IMR-90 (cell line): ENCODE measurements at regions of chr17 and their contacts with region 1.

Region 1: GRCh38 chr17:28053044-28053670 is 10.7 kb downstream of the NLK start:
- DNase-seq: no peak
- ATAC-seq: 0 out of 2 replicates have a peak, but pooled peaks have one; percentile 18
- H3K4me3 ChIP-seq: no peak overlapping the region
- H3K27ac ChIP-seq: no peak overlapping the region
- H3K4me1 ChIP-seq: peaks cover 9% of the 10 kb centered on the region
- H3K27me3 ChIP-seq: no peaks in the 10 kb centered on the region
- CTCF ChIP-seq: no peak
- POLR2A ChIP-seq: no peak
- RAD21 ChIP-seq: no peak

Region 2: DNA sequence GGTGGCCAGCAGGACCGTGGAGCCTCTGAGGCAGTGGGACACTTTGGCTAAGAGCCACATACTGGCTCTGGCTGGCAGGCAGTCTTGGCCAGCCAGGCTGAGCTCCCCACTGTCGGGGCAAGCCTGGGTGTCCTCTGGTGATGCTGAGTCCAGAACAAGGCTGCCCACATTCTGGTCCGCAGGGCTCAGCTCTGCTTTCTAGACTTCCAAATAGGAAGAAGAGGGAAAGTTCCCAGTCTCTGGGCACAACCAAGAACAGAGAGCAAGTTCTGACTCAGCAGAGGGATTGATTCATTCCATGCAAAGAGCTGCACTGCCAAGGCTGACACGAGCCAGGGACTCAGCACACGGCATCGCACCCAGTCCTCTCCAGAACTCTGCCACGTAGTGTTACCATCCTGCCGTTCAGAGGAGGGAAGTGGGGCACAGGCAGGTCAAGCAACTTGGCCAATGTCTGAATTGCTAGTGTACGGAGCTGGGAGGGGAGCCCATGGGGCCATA is 311.7 kb before region 1 on chr17:
- CTCF ChIA-PET with region 1: no interaction called
- POLR2A ChIA-PET with region 1: no interaction called
- dilution Hi-C with region 1: no loop called
- in situ Hi-C with region 1: no loop called
- intact Hi-C with region 1: no loop called
- DNase-seq: peak; percentile 10
- ATAC-seq: peak; percentile 57
- H3K4me3 ChIP-seq: no peak overlapping the region
- H3K27ac ChIP-seq: no peak overlapping the region
- H3K4me1 ChIP-seq: no peaks in the 10 kb centered on the region
- H3K27me3 ChIP-seq: peaks cover 1% of the 10 kb centered on the region
- CTCF ChIP-seq: no peak
- POLR2A ChIP-seq: no peak
- RAD21 ChIP-seq: no peak

Region 3: DNA sequence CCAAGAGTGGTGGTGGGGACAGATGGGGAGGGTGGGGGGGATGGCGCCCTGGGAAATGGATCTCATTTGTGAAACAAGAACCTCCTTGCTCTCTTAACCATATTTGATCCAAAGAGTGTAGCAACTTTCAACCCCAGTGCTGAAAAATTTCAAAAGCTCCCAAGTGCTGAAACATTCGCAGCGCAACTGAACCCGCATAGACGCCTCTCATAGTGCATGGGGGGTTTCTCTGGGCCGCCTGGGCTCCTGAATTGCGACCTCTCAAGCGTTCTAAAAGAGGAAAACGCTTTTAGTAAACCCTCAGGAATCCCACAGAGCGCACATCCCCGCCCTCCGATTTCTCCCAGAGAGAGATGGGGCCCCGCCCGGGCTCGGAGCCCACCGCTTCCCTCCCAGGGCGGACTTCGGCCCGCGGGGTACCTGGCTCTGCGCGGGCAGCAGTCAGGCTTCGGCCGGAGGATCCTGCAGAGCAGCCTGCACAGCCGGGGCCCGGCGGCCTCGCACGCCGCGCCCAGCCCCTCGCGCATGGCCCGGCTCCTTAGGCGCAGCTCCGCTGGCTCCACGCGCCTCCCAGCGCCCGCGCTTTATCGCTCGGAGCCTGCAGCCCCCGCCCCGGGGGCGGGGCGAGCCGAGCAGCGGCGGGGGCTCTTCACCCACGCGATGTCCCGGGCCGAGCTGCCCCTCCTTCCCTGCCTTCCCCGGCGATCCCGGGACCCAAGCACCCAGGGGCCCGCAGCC is 259.8 kb before region 1 on chr17:
- CTCF ChIA-PET with region 1: no interaction called
- POLR2A ChIA-PET with region 1: interaction called, 19 read pairs
- dilution Hi-C with region 1: no loop called
- in situ Hi-C with region 1: no loop called
- intact Hi-C with region 1: no loop called
- DNase-seq: no peak
- ATAC-seq: peak; percentile 86
- H3K4me3 ChIP-seq: no peak overlapping the region; the same call in 1 of the 2 replicates
- H3K27ac ChIP-seq: no peak overlapping the region
- H3K4me1 ChIP-seq: no peaks in the 10 kb centered on the region
- H3K27me3 ChIP-seq: peaks cover 44% of the 10 kb centered on the region
- CTCF ChIP-seq: no peak
- POLR2A ChIP-seq: no peak
- RAD21 ChIP-seq: no peak

Region 4: GRCh38 chr17:28125530-28126378 is 72.6 kb after region 1 on chr17:
- CTCF ChIA-PET with region 1: no interaction called
- POLR2A ChIA-PET with region 1: no interaction called
- dilution Hi-C with region 1: no loop called
- in situ Hi-C with region 1: no loop called
- intact Hi-C with region 1: loop called (anchors 5 kb)
- DNase-seq: no peak
- ATAC-seq: peak; percentile 73
- H3K4me3 ChIP-seq: no peak overlapping the region
- H3K27ac ChIP-seq: no peak overlapping the region
- H3K4me1 ChIP-seq: peaks cover 5% of the 10 kb centered on the region
- H3K27me3 ChIP-seq: no peaks in the 10 kb centered on the region
- CTCF ChIP-seq: no peak
- POLR2A ChIP-seq: no peak
- RAD21 ChIP-seq: no peak

Region 5: DNA sequence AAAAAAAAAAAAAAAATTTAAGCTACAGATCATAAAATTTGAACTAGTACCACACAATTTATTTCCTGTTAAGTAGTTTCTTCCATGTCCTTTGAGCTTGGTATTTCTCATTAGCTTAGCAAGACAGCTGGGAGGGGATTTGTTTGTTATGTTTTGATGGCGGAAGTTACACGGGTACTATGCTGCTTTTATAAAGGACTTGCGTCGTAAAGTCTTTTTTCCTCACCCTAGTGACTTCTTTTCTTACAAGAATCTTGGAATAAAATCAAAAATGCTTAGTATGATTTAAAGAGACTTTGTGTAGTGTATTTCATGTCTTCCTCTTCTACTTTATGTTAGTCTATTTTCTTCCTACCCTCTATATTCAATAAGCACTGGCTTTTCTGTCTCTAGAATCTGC is 78.4 kb after region 1 on chr17:
- CTCF ChIA-PET with region 1: no interaction called
- POLR2A ChIA-PET with region 1: interaction called, 19 read pairs
- dilution Hi-C with region 1: no loop called
- in situ Hi-C with region 1: no loop called
- intact Hi-C with region 1: loop called (anchors 5 kb)
- DNase-seq: peak; percentile 70
- ATAC-seq: peak; percentile 30
- H3K4me3 ChIP-seq: no peak overlapping the region
- H3K27ac ChIP-seq: peak overlapping the region; percentile 64; the same call in 1 of the 2 replicates
- H3K4me1 ChIP-seq: peaks cover 1% of the 10 kb centered on the region; the same call in 1 of the 2 replicates
- H3K27me3 ChIP-seq: no peaks in the 10 kb centered on the region
- CTCF ChIP-seq: no peak
- POLR2A ChIP-seq: no peak
- RAD21 ChIP-seq: no peak

Region 6: GRCh38 chr17:28313841-28314240 is 260.7 kb after region 1 on chr17:
- CTCF ChIA-PET with region 1: no interaction called
- POLR2A ChIA-PET with region 1: no interaction called
- dilution Hi-C with region 1: no loop called
- in situ Hi-C with region 1: no loop called
- intact Hi-C with region 1: no loop called
- DNase-seq: no peak
- ATAC-seq: no peak
- H3K4me3 ChIP-seq: no peak overlapping the region
- H3K27ac ChIP-seq: no peak overlapping the region
- H3K4me1 ChIP-seq: 0 out of 2 replicates have a peak, but pooled peaks cover 3% of the 10 kb centered on the region
- H3K27me3 ChIP-seq: peaks cover 5% of the 10 kb centered on the region
- CTCF ChIP-seq: no peak
- POLR2A ChIP-seq: no peak
- RAD21 ChIP-seq: no peak